ENCODE measurements at regions of chr13 and their contacts with region 1.

Region 1: DNA sequence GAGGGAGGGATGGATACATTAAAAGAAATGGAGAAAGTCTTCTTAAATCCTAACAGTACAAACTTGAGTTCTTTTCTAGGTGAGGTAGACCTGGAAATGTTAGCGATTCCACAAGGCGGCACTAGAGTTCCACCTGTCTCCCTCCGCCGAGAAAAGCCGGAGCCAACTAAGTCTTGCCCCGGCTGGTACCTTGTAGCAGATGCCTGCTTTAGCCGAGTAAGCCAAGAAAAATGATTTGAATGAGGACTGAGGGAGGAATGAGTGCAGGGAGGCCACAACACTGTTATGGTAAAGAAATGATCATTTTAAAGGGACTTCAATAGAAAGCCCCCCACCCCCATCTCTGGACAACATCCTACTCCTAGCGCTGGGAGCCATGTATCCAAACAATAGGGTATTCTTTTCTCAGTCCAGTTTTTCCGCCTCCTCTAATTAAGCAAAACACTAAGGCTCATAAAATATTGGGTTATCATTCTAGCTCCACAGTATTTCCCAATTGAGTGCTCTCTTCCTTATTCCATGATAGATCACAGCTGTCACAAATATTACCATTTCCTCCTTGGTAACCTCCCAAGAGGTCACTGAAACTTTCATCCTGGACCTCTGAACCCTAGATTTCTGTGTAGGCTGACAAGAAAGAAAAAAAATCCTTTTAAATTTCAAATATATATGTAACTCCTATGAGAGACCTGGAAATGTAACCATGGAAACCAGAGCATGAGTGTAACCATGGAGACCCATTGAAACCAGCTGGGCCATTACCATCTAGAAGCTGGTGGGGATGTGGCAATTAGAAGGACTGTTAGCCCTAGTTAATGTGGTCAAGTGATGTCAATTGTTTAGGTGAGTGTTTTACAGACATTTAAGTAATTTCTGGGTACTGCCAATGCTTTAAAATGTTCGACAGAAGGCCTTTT is 58.3 kb downstream of the GPALPP1 start:
- DNase-seq: peak; percentile 65 to 68
- H3K4me3 ChIP-seq: no peak overlapping the region
- H3K27ac ChIP-seq: no peak overlapping the region
- H3K4me1 ChIP-seq: no peaks in the 10 kb centered on the region
- H3K27me3 ChIP-seq: no peaks in the 10 kb centered on the region
- CTCF ChIP-seq: peak; percentile 81 to 91 (median 86)
- POLR2A ChIP-seq: no peak

Region 2: GRCh38 chr13:45301243-45301642 is 253.6 kb after region 1 on chr13:
- intact Hi-C with region 1: loop called (anchors 10 kb)
- DNase-seq: no peak
- H3K4me3 ChIP-seq: no peak overlapping the region
- H3K27ac ChIP-seq: no peak overlapping the region
- H3K4me1 ChIP-seq: no peaks in the 10 kb centered on the region
- H3K27me3 ChIP-seq: no peaks in the 10 kb centered on the region
- CTCF ChIP-seq: no peak
- POLR2A ChIP-seq: no peak

Measured in uterus (tissue), 4 donors.